ENCODE measurements at regions of chr17 and their contacts with region 1.

Region 1: GRCh38 chr17:74212913-74213791 is at the start of gene TTYH2:
- DNase-seq: peak; percentile 81 to 96 (median 92)

Region 2: DNA sequence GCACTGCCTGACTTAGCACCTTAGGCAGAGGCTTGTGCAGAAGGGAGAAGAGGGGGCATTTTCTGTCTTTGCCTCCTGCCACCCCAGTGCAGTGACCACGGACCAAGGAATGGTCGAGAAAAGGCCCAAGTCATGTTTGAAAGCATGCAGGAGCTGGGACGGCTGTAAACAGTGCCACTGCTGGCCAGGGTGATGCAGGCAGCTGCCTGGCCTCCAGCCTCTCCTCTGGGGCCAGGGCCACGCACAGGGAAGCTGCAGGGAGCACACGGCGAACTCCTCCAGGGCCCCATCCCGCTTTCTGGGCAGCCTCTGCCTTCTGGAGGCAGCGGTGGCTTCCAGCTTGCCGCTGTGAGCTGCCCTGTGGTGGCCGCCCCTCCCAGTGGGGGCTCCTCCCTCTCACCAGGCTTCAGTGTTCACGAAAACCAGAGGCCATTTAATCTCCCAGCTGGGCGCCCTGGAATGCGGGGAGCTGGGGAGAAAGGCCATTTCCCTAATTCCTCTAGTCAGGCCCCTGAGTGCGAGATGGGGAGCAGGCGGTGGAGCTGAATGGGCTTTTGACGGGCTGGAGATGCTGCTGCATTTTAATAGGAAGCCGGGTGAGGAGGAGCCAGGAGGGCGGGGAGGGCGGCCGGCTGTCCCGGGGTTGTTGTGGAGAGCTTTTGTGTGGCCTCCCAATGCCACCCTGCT is 32.1 kb after region 1 on chr17:
- intact Hi-C with region 1: loop called (anchors 2 kb)
- DNase-seq: peak; percentile 77 to 98 (median 93)

Region 3: DNA sequence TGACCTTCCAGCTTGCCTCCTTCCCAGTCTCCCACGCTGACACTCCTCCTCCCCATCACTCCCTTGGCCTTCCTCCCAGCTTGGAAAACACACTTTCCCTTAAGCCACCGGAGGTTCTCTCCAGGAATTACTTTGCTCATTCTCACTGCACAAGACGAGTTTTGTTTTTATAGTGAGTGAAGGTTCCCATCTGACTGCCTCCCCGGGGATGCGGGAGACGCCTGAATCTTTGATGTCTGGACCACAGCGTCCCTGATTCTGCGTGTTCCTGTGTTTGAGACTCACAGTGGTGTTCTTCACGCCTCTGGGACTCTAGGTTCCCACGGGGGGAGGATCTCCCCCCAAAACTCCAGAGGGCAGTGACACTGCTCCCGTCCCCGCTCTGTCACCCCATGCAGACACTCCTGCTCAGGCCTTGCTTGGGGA is 62.9 kb after region 1 on chr17:
- intact Hi-C with region 1: loop called (anchors 5 kb)
- DNase-seq: peak in 25 of 42 donors; percentile 17 to 73 (median 46)

Region 4: DNA sequence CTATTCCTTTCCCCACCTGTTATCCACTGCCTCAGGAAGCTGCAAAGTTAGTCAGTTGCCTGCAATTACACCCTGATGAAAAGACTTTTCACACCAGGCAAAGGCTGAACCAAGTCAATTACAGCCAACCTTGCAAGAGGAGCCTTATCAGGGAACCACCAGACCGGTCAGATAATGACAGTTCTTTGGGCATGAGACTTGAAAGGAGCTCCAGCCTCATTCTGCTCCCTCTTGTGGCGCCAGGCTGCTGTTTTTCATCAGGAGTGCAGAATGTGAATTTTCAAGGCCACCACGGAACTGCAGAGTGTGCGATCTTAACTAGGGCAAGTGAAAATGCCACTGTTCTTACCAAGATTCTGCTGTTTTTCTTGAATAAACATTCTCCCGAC is 83.4 kb after region 1 on chr17:
- intact Hi-C with region 1: loop called (anchors 2 kb)
- DNase-seq: peak; percentile 39 to 93 (median 83)

Region 5: GRCh38 chr17:74361230-74362068 is 148.3 kb after region 1 on chr17 and contains the start of gene BTBD17:
- intact Hi-C with region 1: loop called (anchors 5 kb)
- DNase-seq: peak; percentile 38 to 91 (median 78)

Measured in head of caudate nucleus (tissue), 42 donors.